Activated T-helper 1 cell treated with anti-CD3 and anti-CD28 coated beads, Interleukin-12 subunit alpha, Interleukin-12 subunit beta, Interleukin-2, Interleukin-4 antibody, amounts not matched to agents 30 ng/mL and 10 ng/mL and 1 ng/mL, durations not matched to agents 14 hours and 24 hours and 36 hours (primary cell): ENCODE measurements at regions of chr4 and their contacts with region 1.

Region 1: GRCh38 chr4:153344131-153345010 is at the start of gene MND1:
- DNase-seq: peak; percentile 90
- H3K4me3 Mint-ChIP-seq: peak within 1 kb of the TSS; percentile 91
- H3K27ac Mint-ChIP-seq: peak within 1 kb of the TSS; percentile 85
- H3K4me1 Mint-ChIP-seq: peaks cover 32% of the 10 kb centered on the region
- H3K27me3 Mint-ChIP-seq: peaks cover 13% of the 10 kb centered on the region
- total RNA-seq, gene MND1: 12.5 and 13.5 TPM in 2 replicates

Region 2: DNA sequence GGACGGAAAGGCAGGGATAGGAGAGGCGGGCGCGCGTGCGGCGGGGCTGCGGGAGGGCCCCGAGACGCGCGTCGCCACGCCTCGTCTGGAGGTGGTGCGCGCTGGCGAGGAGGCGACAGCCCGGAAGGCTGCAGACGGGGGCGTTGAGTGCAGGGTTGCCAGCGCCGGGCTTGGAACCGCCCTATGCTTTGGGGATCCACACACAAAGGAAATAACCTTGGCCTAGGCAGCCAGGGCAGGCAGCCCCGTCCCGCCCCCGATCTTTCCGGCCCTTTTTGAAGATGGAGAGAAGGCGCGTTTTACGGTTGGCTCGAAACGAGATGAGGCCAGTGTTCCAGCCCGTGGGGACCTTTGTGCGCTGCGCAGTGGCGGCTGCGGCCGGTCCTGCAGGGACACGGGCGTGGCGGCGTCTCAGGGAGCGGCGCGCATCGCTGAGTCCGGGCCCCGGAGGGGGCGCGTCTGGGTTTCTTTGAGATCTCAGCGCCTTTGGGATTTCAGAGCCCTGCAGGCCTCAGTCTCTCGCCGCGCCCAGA is 191.0 kb before region 1 on chr4:
- intact Hi-C with region 1: loop called (anchors 5 kb)
- DNase-seq: peak; percentile 70
- H3K4me3 Mint-ChIP-seq: peak overlapping the region; percentile 82
- H3K27ac Mint-ChIP-seq: peak overlapping the region; percentile 67
- H3K4me1 Mint-ChIP-seq: peaks cover 59% of the 10 kb centered on the region
- H3K27me3 Mint-ChIP-seq: peaks cover 42% of the 10 kb centered on the region

Region 3: DNA sequence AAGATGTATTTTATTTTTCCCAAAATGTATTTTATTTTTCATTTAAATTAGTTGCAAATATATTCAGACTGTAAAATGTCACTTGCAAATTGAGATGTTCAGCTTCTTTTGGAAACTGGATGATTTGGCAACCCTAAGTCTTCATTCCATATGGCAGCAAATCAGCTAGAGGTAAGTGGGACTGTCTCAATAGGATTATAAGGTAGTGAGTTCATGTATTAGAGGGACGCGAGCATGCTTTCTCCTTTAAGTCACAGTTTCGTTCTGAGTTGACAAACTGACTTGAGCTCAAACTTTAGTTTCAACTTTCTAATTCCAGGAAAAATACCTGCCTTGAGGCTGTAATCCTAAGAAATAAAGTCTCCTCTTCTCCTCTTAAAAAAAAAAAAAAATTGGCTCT is 77.6 kb after region 1 on chr4:
- intact Hi-C with region 1: loop called (anchors 1 kb)
- DNase-seq: no peak
- H3K4me3 Mint-ChIP-seq: no peak overlapping the region
- H3K27ac Mint-ChIP-seq: no peak overlapping the region
- H3K4me1 Mint-ChIP-seq: peaks cover 41% of the 10 kb centered on the region
- H3K27me3 Mint-ChIP-seq: no peaks in the 10 kb centered on the region

Region 4: DNA sequence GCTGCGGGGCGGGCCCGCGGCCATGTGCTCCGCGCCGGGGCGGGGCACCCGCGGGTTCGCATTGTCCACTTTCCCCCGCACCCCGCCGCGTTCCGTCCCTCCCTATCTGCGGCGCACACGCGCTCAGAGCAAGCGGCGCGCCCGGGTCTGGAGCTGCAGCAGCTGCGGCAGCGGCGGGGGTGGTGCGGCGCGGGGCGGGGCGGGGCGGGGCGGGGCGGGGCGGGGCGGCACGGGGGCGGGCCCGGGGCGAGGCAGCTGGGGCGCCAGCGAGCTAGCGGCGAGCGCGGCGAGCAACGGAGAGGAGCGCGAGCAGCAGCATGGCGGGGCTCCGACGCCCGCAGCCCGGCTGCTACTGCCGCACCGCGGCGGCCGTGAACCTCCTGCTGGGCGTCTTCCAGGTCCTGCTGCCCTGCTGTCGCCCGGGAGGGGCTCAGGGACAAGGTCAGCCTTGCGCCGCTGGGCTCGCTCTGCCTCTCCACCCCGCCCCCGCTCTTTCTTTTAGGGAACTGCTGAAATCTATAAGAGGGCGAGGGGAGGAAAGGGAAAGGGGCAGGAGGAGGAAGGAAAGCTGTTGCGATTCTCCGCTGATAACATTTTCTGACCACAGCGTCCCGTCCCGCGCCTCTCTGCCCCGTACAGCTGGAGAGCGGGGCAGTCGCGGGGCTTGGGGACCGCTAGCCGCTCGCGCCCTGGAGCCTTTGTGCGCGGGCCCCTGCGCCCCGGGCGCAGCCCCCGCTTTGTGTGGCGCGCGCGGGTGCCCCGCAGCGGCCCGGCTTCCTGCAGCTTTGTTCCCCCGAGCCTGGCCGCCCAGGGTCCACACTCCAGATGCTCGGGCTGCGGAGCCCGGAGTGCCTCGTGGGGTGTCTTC is 121.9 kb after region 1 on chr4 and contains the start of gene TMEM131L:
- intact Hi-C with region 1: loop called (anchors 1 kb)
- DNase-seq: peak; percentile 63
- H3K4me3 Mint-ChIP-seq: peak within 1 kb of the TSS; percentile 89
- H3K27ac Mint-ChIP-seq: peak within 1 kb of the TSS; percentile 90
- H3K4me1 Mint-ChIP-seq: peaks cover 50% of the 10 kb centered on the region
- H3K27me3 Mint-ChIP-seq: no peaks in the 10 kb centered on the region
- total RNA-seq, gene TMEM131L: 39.5 and 42.2 TPM in 2 replicates

Region 5: DNA sequence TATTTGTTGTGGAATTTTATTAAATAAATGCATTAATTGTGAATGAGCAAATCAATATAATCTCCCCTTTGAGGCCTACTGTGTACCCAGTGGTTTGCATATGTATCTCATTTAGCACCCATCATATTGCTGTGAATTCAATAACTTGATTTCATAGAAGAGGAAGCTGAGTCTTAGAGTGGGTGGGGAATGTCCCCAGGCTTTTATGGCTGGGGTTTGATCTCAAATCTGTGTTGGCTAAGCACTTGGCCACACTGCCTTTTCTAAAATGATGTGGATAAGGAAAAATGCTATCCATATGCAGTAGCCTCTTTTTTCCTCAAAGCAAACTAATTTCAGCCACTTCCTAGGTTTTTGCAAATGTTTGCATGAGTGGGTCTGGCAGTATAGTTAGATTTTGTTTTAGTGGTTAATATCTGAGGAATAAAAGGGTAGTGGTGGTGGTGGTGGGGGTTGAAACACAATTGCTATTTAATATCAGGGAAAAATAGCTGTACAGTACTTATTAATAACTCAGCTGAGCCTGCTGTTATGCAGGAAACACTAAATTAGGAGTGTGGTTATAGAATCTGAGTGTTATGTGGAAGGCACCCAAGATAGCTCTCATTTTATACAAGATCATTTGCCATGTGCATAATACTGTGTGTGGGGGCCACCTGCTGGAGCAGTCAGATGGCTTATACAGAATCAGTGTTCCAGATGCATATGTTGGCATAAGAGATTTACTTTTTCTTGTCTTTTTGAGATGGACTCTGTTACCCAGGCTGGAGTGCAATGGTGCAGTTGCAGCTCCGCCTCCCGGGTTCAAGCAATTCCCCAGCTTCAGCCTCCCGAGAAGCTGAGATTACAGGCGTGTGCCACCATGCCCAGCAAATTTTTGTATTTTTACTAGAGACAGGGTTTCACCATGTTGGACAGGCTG is 229.8 kb after region 1 on chr4:
- intact Hi-C with region 1: loop called (anchors 1 kb)
- DNase-seq: peak; percentile 28
- H3K4me3 Mint-ChIP-seq: no peak overlapping the region
- H3K27ac Mint-ChIP-seq: peak overlapping the region; percentile 41
- H3K4me1 Mint-ChIP-seq: peaks cover 58% of the 10 kb centered on the region
- H3K27me3 Mint-ChIP-seq: no peaks in the 10 kb centered on the region

Region 6: DNA sequence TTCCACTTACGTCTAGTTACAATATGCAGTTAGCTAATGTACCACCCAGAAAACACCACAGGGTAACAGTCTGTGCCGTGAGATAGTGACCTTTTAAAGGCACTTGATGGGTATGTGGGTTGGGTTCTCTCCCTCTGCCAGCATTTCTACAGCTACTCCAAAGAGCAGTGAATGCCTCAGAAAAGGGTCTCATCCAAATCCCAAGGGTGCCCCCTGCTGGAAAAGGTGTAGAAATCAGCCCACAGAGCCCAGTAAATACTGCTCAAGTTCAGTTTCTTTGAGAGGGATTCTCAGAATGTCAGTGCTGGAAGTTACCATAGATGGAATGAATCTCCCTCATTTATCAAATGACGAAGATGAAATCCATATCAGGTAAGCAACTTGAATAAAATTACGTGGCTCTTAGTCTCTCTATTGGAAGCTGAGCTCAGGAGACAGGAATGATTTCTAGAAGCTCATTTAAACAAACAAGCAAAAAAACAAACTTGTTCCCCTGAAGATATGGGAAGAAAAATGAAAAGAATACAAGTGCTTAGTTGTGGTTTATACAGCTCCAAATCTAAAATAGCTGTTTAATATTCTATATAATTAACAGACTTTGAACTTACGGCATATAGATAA is 405.9 kb after region 1 on chr4:
- intact Hi-C with region 1: loop called (anchors 1 kb)
- DNase-seq: peak; percentile 52
- H3K4me3 Mint-ChIP-seq: no peak overlapping the region
- H3K27ac Mint-ChIP-seq: no peak overlapping the region
- H3K4me1 Mint-ChIP-seq: no peaks in the 10 kb centered on the region
- H3K27me3 Mint-ChIP-seq: peaks cover 31% of the 10 kb centered on the region